ENCODE measurements at regions of chr1 and their contacts with region 1.

Region 1: GRCh38 chr1:27284425-27285273 is 37.3 kb upstream of the TMEM222 start:
- DNase-seq: peak; percentile 78 to 86
- H3K4me3 ChIP-seq: no peak overlapping the region
- H3K27ac ChIP-seq: no peak overlapping the region
- H3K4me1 ChIP-seq: no peaks in the 10 kb centered on the region
- H3K27me3 ChIP-seq: no peaks in the 10 kb centered on the region
- CTCF ChIP-seq: peak; percentile 68 to 81 (median 70)
- POLR2A ChIP-seq: no peak

Region 2: GRCh38 chr1:27102707-27103491 is 181.8 kb before region 1 on chr1:
- intact Hi-C with region 1: loop called (anchors 5 kb)
- DNase-seq: peak; percentile 79 to 86
- H3K4me3 ChIP-seq: no peak overlapping the region
- H3K27ac ChIP-seq: peak overlapping the region in 1 of 2 donors; percentile 24
- H3K4me1 ChIP-seq: peaks cover 6 to 18% of the 10 kb centered on the region in 2 donors
- H3K27me3 ChIP-seq: no peaks in the 10 kb centered on the region
- CTCF ChIP-seq: peak; percentile 93 to 99 (median 98)
- POLR2A ChIP-seq: no peak

Measured in uterus (tissue), 4 donors.